HepG2 (cell line): ENCODE measurements at regions of chr7 and their contacts with region 1.

Region 1: GRCh38 chr7:39525926-39526325 is 40.3 kb upstream of the YAE1 start:
- DNase-seq: no peak
- ATAC-seq: no peak
- H3K4me3 ChIP-seq: no peak overlapping the region
- H3K27ac ChIP-seq: no peak overlapping the region
- H3K4me1 ChIP-seq: no peaks in the 10 kb centered on the region
- H3K27me3 ChIP-seq: no peaks in the 10 kb centered on the region
- CTCF ChIP-seq: no peak
- EP300 ChIP-seq: no peak
- POLR2A ChIP-seq: no peak
- RAD21 ChIP-seq: no peak

Region 2: DNA sequence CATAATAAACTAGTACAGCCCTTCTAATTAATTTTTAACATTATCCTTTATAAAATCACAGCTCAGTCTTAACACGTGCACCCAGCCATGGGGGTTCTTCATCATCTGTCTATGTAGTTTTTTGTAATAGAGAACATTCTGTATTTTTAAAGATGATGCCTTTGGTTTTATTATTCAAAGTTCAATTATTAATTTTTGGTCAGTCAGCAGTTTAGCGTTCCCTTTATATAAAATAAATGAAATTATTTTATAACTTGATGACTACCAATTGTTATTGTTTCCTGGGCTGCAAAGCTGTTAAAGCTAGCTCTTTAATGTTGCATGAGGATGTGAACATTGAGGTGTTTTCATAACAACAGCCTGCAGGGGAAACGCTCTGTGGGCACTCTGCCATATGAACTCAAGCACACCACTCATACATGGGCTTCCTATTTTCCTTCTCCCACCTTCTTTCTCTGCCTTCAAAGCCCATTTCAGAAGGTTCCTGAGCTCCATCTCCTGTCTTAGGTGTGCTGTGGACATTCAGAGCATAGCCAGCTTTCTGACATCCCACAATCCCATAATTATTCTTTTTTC is 131.7 kb before region 1 on chr7:
- CTCF ChIA-PET with region 1: no interaction called
- POLR2A ChIA-PET with region 1: no interaction called
- in situ Hi-C with region 1: no loop called
- intact Hi-C with region 1: no loop called
- DNase-seq: no peak
- ATAC-seq: no peak
- H3K4me3 ChIP-seq: no peak overlapping the region
- H3K27ac ChIP-seq: no peak overlapping the region
- H3K4me1 ChIP-seq: no peaks in the 10 kb centered on the region
- H3K27me3 ChIP-seq: no peaks in the 10 kb centered on the region
- CTCF ChIP-seq: no peak
- EP300 ChIP-seq: no peak
- POLR2A ChIP-seq: no peak
- RAD21 ChIP-seq: no peak

Region 3: DNA sequence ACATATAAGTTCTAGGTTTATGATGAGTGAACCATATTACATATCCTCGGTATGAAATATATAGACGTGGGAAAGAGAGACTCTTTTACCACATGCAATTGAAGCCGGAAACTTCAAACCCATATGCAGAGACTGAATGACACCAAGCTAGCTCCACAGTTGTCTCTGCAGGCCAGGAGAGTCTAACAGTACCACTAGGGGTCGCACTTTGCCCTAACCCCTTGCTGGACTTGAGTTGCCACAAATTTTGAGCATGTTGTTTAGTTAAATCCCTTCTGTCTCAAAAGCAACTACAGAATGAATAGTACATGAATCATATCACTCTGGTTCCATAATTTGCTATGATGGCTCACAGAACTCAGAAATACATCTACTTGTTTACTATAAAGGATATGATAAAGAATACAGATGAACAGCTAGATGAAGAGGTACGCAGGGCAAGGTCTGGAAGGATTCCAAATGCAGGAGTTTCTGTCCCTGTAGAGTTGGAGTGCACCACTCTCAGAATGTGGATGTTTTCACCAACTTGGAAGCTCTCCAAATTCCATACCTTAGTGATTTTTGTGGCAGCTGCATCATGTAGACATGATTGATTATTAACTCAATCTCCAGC is 72.1 kb before region 1 on chr7:
- CTCF ChIA-PET with region 1: interaction called, 19 read pairs
- POLR2A ChIA-PET with region 1: no interaction called
- in situ Hi-C with region 1: no loop called
- intact Hi-C with region 1: loop called (anchors 2 kb)
- DNase-seq: peak; percentile 44
- ATAC-seq: peak; percentile 86
- H3K4me3 ChIP-seq: no peak overlapping the region
- H3K27ac ChIP-seq: no peak overlapping the region
- H3K4me1 ChIP-seq: peaks cover 8% of the 10 kb centered on the region
- H3K27me3 ChIP-seq: peaks cover 0 to 14% of the 10 kb centered on the region in 2 experiments; a peak in 2 of 5 replicates
- CTCF ChIP-seq: peak; percentile 68
- EP300 ChIP-seq: no peak
- POLR2A ChIP-seq: no peak
- RAD21 ChIP-seq: no peak